AG04449 (cell line): ENCODE measurements at regions of chr6 and their contacts with region 1.

Region 1: GRCh38 chr6:36885461-36886401 is at the start of gene C6orf89:
- DNase-seq: peak; percentile 77
- H3K4me3 ChIP-seq: peak within 1 kb of the TSS; percentile 86
- CTCF ChIP-seq: peak; percentile 81

Region 2: GRCh38 chr6:36633915-36634314 is 251.8 kb before region 1 on chr6:
- CTCF ChIA-PET with region 1: no interaction called
- POLR2A ChIA-PET with region 1: no interaction called
- DNase-seq: no peak
- H3K4me3 ChIP-seq: no peak overlapping the region
- CTCF ChIP-seq: no peak

Region 3: DNA sequence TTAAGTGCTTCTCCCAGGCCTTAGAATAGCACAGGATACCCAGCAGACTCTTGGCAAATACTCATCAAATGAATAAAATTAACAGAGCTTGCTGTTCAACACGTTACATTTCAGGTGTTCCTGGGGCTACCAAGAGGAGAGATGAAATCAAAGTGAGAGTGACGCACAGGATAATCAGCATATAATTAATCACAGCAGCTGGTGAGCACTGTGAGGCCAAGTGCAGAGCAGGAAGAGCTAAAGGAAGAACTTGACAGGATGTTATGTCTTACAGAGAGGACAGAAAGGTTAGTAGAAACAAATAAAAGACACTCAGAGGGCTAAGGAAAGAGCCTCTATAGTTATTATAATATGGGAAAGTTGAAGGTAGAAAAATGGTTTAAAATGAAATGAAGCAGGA is 19.9 kb before region 1 on chr6:
- CTCF ChIA-PET with region 1: interaction called, 118 read pairs
- POLR2A ChIA-PET with region 1: no interaction called
- DNase-seq: no peak
- H3K4me3 ChIP-seq: no peak overlapping the region
- CTCF ChIP-seq: no peak

Region 4: DNA sequence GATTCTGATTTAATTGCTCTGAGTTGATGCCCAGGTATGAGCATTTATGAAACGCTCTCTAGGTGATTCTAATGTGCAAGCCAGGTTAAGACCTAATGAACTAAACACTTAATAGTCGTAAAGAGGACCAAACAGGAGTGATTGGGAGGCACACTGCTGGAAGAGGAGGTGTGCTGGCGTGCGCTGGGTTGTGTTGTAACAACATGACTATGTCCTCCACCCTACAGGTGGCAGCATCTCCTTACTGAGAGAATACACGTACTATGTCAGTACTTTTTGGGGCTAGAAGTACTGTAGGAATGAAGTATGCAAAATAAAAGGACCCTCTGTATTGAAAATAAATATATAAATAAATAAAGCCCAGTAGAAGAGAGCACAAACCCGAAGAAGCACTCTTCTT is 11.9 kb after region 1 on chr6:
- CTCF ChIA-PET with region 1: interaction called, 32 read pairs
- POLR2A ChIA-PET with region 1: no interaction called
- DNase-seq: no peak
- H3K4me3 ChIP-seq: no peak overlapping the region
- CTCF ChIP-seq: no peak

Region 5: DNA sequence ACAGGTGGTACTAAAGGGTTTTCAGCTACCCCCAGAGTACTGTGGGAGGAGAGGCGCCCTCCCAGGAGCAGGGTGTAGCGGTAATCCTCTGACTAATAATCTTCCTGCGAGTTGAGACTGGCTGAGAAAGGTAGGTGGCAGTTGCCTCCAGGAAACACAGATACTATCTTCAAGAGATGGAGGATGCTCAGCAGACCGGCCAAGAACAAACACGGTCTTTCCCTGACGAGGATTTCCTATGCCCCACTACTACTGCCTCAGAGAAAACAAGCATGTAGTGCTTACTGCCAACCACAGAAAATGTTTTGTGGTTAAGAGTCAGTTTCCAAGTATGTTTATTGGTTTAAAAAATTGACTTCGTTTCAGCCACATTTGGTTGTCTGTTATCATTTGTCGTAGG is 26.9 kb after region 1 on chr6:
- CTCF ChIA-PET with region 1: interaction called, 16 read pairs
- POLR2A ChIA-PET with region 1: no interaction called
- DNase-seq: peak; percentile 74
- H3K4me3 ChIP-seq: no peak overlapping the region
- CTCF ChIP-seq: no peak

Region 6: GRCh38 chr6:36979347-36979742 is 93.6 kb after region 1 on chr6:
- CTCF ChIA-PET with region 1: interaction called, 87 read pairs
- POLR2A ChIA-PET with region 1: interaction called, 3 read pairs
- DNase-seq: no peak
- H3K4me3 ChIP-seq: no peak overlapping the region
- CTCF ChIP-seq: peak; percentile 86

Region 7: GRCh38 chr6:37207903-37208456 is 322.2 kb after region 1 on chr6:
- CTCF ChIA-PET with region 1: interaction called, 16 read pairs
- POLR2A ChIA-PET with region 1: no interaction called
- DNase-seq: no peak
- H3K4me3 ChIP-seq: no peak overlapping the region
- CTCF ChIP-seq: peak; percentile 84